ENCODE measurements at regions of chr13 and their contacts with region 1.

Region 1: DNA sequence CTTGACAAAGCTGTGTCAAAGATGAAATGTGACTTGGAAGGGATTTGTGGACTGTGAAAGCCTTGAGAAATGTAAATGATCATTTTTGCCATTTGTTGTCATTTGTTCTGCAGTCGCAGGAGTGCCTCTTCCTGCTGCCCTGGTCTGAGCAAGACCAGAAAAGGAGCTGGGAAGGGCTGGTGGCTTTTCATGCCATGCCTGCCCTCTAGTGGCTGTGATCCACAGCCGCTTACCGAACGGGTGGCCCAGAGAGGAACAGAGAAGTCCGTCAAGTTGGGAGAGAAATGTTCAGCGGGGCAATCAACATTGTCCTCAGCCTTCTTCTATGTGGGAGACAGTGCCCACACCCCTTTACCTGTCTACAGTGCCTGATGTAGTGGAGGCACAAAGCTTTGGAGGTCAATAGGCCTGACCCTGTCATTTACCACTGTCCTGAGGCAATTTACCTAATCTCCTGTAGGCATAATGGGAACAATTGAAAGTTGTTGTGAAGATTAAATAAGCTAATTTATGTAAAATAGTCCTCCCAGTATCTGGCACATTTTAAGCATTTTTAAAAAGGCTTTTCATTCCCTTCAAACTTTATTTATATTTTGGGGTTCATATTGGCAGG is 224.4 kb downstream of the B3GLCT start:
- DNase-seq: peak; percentile 74 to 88 (median 85)
- ATAC-seq: peak; percentile 94 to 98
- H3K4me3 ChIP-seq: no peak overlapping the region
- H3K27ac ChIP-seq: no peak overlapping the region
- H3K4me1 ChIP-seq: no peaks in the 10 kb centered on the region
- H3K27me3 ChIP-seq: no peaks in the 10 kb centered on the region

Region 2: GRCh38 chr13:31174018-31174417 is 250.2 kb before region 1 on chr13:
- intact Hi-C with region 1: loop called in 1 of 4 experiments (anchors 5 kb)
- DNase-seq: no peak
- ATAC-seq: no peak
- H3K4me3 ChIP-seq: no peak overlapping the region
- H3K27ac ChIP-seq: no peak overlapping the region
- H3K4me1 ChIP-seq: no peaks in the 10 kb centered on the region
- H3K27me3 ChIP-seq: no peaks in the 10 kb centered on the region

Region 3: DNA sequence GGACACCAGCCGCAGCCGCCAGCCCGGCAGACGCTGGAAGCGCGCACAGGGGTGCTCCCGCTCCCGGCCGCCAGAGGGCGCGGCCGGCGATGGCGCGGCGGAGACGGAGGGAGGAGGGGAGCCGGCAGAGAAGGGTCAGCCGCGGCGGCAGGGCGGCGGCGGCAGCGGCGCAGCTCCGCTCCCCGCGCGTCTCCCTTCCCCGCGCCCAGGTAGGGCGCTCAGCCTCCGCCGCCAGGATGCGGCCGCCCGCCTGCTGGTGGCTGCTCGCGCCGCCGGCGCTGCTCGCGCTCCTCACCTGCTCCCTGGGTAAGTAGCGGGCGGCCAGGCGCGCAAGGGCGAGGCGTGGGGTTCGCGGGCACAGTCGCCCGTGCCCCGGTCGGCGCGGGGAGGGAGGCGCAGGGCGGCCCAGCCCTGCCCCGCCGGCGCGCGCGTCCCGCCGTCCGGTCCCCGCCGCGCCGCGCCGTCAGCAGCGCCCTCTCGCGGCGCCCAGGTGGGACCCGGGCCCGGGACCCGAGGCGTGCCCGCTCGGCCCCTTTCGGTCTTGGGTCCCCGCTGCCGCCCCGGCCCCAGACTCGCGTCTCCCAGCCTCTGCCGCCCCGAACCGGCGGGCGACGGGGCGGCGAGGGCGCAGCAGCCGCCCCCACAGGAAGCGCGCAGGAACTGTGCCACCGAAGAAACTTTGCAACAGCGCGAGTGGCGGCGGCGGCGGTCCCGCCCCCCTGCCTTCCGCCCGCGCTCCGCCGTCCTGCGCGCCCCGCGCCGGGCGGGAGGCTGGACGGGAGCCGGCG is 224.2 kb before region 1 on chr13 and contains the start of gene B3GLCT:
- intact Hi-C with region 1: loop called in 1 of 4 experiments (anchors 10 kb)
- DNase-seq: peak; percentile 80 to 94 (median 92)
- ATAC-seq: peak; percentile 91 to 92
- H3K4me3 ChIP-seq: peak within 1 kb of the TSS; percentile 87
- H3K27ac ChIP-seq: peak within 1 kb of the TSS; percentile 97
- H3K4me1 ChIP-seq: peaks cover 4% of the 10 kb centered on the region
- H3K27me3 ChIP-seq: no peaks in the 10 kb centered on the region
- total RNA-seq, gene B3GLCT: 24.5 to 45.1 (median 27.5) TPM

Region 4: DNA sequence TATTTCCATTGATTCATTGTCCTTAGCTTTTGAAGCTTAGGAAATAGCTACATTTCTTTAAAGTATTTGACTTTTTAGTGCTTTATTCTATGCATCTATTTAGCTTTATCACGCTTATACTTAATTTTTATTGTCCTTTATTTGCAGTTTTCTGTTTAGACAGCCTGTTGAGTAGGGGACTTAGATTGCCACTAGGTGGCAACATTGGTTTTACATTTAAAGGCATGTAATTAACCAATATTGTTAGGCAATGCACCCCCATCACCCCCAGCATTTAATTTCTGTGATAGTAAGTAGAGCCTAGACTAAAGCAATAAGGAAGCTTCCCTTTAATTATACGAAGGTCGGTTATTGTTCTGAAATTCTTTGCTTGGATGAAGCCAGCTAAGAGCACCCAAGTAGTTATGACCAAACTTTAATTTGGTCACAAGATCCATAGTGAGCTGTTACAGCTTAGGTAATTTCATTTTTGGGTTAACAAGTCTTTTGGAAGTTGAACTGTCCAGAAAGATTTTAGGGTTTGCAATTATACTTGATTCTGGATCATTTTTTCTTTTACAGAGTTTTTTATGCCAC is 187.9 kb before region 1 on chr13:
- intact Hi-C with region 1: loop called (anchors 2 to 10 kb)
- DNase-seq: no peak
- ATAC-seq: no peak
- H3K4me3 ChIP-seq: no peak overlapping the region
- H3K27ac ChIP-seq: no peak overlapping the region
- H3K4me1 ChIP-seq: no peaks in the 10 kb centered on the region
- H3K27me3 ChIP-seq: no peaks in the 10 kb centered on the region

Region 5: GRCh38 chr13:31444266-31444856 is 20.1 kb after region 1 on chr13:
- intact Hi-C with region 1: no loop called
- DNase-seq: peak; percentile 17 to 69 (median 53)
- ATAC-seq: peak; percentile 38 to 68
- H3K4me3 ChIP-seq: no peak overlapping the region
- H3K27ac ChIP-seq: peak overlapping the region; percentile 20
- H3K4me1 ChIP-seq: no peaks in the 10 kb centered on the region
- H3K27me3 ChIP-seq: no peaks in the 10 kb centered on the region

Region 6: GRCh38 chr13:31629085-31629780 is 205.0 kb after region 1 on chr13:
- intact Hi-C with region 1: no loop called
- DNase-seq: peak; percentile 37 to 55 (median 49)
- ATAC-seq: peak in 1 of 2 donors; percentile 87
- H3K4me3 ChIP-seq: no peak overlapping the region
- H3K27ac ChIP-seq: no peak overlapping the region
- H3K4me1 ChIP-seq: no peaks in the 10 kb centered on the region
- H3K27me3 ChIP-seq: no peaks in the 10 kb centered on the region

Measured in right cardiac atrium (tissue), 5 donors.